Gastrocnemius medialis (tissue), 4 donors: ENCODE measurements at regions of chr22 and their contacts with region 1.

Region 1: GRCh38 chr22:25890651-25891050 is 148.7 kb downstream of the MYO18B start:
- DNase-seq: no peak
- ATAC-seq: no peak
- H3K4me3 ChIP-seq: no peak overlapping the region
- H3K27ac ChIP-seq: no peak overlapping the region
- H3K4me1 ChIP-seq: no peaks in the 10 kb centered on the region
- H3K27me3 ChIP-seq: no peaks in the 10 kb centered on the region
- CTCF ChIP-seq: no peak
- POLR2A ChIP-seq: no peak

Region 2: DNA sequence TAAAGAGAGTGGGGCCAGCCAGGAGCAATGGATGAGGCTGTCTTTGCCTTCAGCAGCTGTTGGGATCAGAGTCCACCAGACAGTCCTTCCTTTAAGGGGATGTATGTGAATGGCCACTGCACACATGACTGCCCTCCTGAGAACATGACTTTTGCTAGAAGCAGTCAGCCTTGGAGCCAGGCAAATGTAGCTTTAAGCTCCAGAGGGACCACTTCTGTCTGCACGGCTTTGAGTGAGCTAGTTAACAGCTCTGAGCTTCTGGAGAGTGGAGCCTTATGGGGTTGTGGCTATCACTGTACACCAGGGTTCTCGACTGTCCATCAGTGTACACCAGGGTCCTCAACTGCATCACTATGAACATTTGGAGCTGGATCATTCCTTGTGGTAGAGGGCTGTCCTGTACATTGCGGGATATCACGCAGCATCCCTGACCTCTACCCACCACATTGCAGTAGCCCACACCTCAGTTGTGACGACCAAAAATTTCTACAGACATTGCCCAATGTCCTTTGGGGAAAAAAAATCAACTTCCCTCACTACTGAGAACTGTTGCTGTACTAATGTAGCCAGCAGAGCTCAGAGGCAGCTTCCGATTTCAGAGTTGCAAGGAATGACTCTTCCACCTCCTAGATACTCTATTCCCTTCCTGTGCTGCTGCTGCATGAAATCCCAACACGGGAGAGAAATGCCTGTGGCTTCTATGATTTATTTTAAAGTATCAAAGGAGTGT is 20.8 kb after region 1 on chr22:
- in situ Hi-C with region 1: no loop called
- intact Hi-C with region 1: loop called (anchors 2 kb)
- DNase-seq: no peak
- ATAC-seq: no peak
- H3K4me3 ChIP-seq: no peak overlapping the region
- H3K27ac ChIP-seq: no peak overlapping the region
- H3K4me1 ChIP-seq: no peaks in the 10 kb centered on the region
- H3K27me3 ChIP-seq: no peaks in the 10 kb centered on the region
- CTCF ChIP-seq: no peak
- POLR2A ChIP-seq: no peak